ENCODE measurements at regions of chr7 and their contacts with region 1.

Region 1: DNA sequence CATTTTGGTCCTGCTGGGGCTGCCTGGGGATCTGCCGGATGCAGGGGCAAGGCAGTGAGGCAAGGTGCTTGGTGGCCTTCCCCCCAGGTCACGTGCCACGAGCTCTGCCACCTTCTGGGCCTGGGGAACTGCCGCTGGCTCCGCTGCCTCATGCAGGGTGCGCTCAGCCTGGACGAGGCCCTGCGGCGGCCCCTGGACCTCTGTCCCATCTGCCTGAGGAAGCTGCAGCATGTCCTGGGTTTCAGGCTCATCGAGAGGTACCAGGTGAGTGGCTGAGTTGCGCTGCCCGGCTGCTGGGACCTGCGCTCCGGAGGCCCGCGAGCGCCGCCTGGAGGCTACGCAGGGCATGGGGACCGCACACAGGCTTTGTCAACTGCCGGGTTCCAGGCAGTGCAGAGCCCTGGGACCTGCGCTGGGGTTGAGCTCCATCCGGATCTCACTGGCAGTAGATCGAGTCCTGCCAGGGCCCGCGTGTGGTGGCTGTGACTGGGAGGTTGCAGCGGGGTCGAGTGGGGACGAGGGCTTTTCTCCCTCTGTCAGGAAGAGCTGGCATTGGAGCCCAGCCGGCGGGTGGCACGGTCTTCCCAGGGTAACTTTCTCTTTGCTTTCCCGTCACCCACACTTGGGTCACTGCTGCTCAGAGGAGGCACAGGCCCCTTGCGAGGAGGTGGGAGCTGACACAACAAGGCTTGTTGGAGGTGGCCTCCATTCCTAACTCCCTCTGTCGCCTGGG is 21.7 kb downstream of the AMZ1 start:
- DNase-seq: peak; percentile 41 to 66
- ATAC-seq: peak; percentile 43 to 65 (median 58)
- H3K4me3 ChIP-seq: peak overlapping the region in 3 of 10 donors; percentile 3 to 24 (median 19)
- H3K27ac ChIP-seq: no peak overlapping the region
- H3K4me1 ChIP-seq: peaks cover 0 to 34% (median 23%) of the 10 kb centered on the region in 9 donors
- H3K27me3 ChIP-seq: no peaks in the 10 kb centered on the region
- CTCF ChIP-seq: peak; percentile 62 to 92 (median 82)

Region 2: GRCh38 chr7:2698581-2699288 is 11.0 kb before region 1 on chr7:
- intact Hi-C with region 1: no loop called
- DNase-seq: no peak
- ATAC-seq: no peak
- H3K4me3 ChIP-seq: no peak overlapping the region
- H3K27ac ChIP-seq: no peak overlapping the region
- H3K4me1 ChIP-seq: peaks cover 0 to 7% (median 0%) of the 10 kb centered on the region in 9 donors
- H3K27me3 ChIP-seq: peaks cover 0 to 17% (median 0%) of the 10 kb centered on the region in 7 donors
- CTCF ChIP-seq: no peak

Region 3: DNA sequence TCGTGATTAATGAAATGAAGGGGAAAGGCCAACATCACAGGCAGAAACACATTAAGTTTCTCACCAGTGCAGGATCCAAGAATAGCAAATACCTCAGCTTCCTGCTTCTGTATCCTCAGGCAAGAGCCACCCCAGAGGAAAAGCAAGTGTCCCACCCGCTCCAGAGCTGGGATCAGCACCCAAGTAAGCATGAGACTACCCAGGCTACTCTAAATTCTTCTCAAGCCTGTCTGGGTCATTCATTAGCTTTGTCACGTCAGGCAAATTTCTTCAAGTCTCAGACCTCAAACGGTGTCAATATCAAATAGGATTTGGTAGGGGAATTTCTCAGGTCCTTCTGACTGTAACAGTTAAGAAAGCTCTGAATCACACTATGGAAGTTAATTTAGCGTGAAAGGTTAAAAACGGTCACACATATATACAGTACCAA is 75.4 kb after region 1 on chr7:
- intact Hi-C with region 1: no loop called
- DNase-seq: peak in 1 of 2 donors; percentile 62
- ATAC-seq: peak in 7 of 8 donors; percentile 70 to 92 (median 83)
- H3K4me3 ChIP-seq: no peak overlapping the region
- H3K27ac ChIP-seq: peak overlapping the region in 8 of 10 donors; percentile 36 to 83 (median 60)
- H3K4me1 ChIP-seq: peaks cover 0 to 40% (median 25%) of the 10 kb centered on the region in 9 donors
- H3K27me3 ChIP-seq: no peaks in the 10 kb centered on the region
- CTCF ChIP-seq: no peak

Region 4: GRCh38 chr7:2903682-2904162 is 194.0 kb after region 1 on chr7:
- intact Hi-C with region 1: no loop called
- DNase-seq: no peak
- ATAC-seq: no peak
- H3K4me3 ChIP-seq: no peak overlapping the region
- H3K27ac ChIP-seq: no peak overlapping the region
- H3K4me1 ChIP-seq: no peaks in the 10 kb centered on the region
- H3K27me3 ChIP-seq: peaks cover 0 to 8% (median 0%) of the 10 kb centered on the region in 7 donors
- CTCF ChIP-seq: no peak

Region 5: DNA sequence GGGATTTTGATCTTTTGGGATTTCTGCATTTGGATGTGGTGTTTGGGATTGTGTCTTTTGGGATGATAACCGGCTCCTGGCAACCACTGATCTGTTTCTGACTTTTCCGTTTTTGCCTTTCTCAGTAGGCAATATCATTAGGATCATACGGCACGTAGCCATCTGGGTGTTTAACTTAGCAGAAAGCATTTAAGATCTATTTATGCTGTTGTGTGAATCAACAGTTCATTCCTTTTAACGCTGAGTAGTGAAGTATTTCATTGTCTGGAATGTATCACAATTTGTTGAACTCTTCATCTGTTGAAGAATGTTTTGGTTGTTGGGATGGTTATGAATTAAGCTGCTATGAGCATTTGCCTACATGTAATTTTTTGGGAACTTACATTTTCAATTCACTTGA is 1050.9 kb after region 1 on chr7:
- intact Hi-C with region 1: loop called in 1 of 10 experiments (anchors 5 kb)
- DNase-seq: no peak
- ATAC-seq: no peak
- H3K4me3 ChIP-seq: no peak overlapping the region
- H3K27ac ChIP-seq: no peak overlapping the region
- H3K4me1 ChIP-seq: no peaks in the 10 kb centered on the region
- H3K27me3 ChIP-seq: peaks cover 0 to 4% (median 0%) of the 10 kb centered on the region in 7 donors
- CTCF ChIP-seq: no peak

Measured in heart right ventricle (tissue), 16 donors.